HepG2 (cell line): ENCODE measurements at regions of chr3 and their contacts with region 1.

Region 1: GRCh38 chr3:60114191-60114590 is 1064.4 kb upstream of the CFAP20DC start:
- DNase-seq: no peak
- ATAC-seq: no peak
- H3K4me3 ChIP-seq: no peak overlapping the region
- H3K27ac ChIP-seq: no peak overlapping the region
- H3K4me1 ChIP-seq: no peaks in the 10 kb centered on the region
- H3K27me3 ChIP-seq: no peaks in the 10 kb centered on the region
- CTCF ChIP-seq: no peak
- EP300 ChIP-seq: no peak
- POLR2A ChIP-seq: no peak
- RAD21 ChIP-seq: no peak

Region 2: GRCh38 chr3:60090548-60090947 is 23.6 kb before region 1 on chr3:
- CTCF ChIA-PET with region 1: no interaction called
- POLR2A ChIA-PET with region 1: no interaction called
- in situ Hi-C with region 1: no loop called
- intact Hi-C with region 1: loop called (anchors 1 kb)
- DNase-seq: no peak
- ATAC-seq: no peak
- H3K4me3 ChIP-seq: no peak overlapping the region
- H3K27ac ChIP-seq: no peak overlapping the region
- H3K4me1 ChIP-seq: no peaks in the 10 kb centered on the region
- H3K27me3 ChIP-seq: no peaks in the 10 kb centered on the region
- CTCF ChIP-seq: no peak
- EP300 ChIP-seq: no peak
- POLR2A ChIP-seq: no peak
- RAD21 ChIP-seq: no peak